Colonic mucosa (tissue), 4 donors: ENCODE measurements at regions of chr5 and their contacts with region 1.

Region 1: DNA sequence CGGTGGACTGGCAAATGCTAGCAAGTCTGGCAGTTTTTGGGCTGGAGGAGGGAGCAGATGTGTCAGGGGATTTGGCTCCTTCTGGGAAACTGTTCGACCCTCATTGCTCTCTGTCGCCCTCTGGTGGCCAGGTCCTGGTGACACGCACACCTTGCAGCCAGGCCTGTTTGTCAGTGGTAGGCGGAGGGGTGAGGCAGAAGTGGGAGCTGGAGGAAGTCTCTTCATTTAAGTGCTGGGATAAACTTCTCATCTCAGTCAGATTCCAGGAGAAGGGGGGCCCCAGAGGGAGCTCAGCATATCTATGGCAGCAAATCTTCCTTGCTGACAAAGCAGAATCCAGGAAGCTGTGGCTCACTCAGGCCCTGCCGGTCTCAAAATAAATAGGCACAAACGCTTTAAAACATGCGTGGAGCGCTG is 326.5 kb downstream of the ZSWIM6 start:
- DNase-seq: peak; percentile 89
- H3K4me3 ChIP-seq: no peak overlapping the region
- H3K27ac ChIP-seq: no peak overlapping the region
- H3K4me1 ChIP-seq: no peaks in the 10 kb centered on the region
- H3K27me3 ChIP-seq: no peaks in the 10 kb centered on the region
- CTCF ChIP-seq: peak; percentile 94

Region 2: GRCh38 chr5:61055434-61056006 is 603.1 kb before region 1 on chr5:
- intact Hi-C with region 1: loop called (anchors 10 kb)
- DNase-seq: no peak
- H3K4me3 ChIP-seq: no peak overlapping the region
- H3K27ac ChIP-seq: no peak overlapping the region
- H3K4me1 ChIP-seq: no peaks in the 10 kb centered on the region
- H3K27me3 ChIP-seq: no peaks in the 10 kb centered on the region
- CTCF ChIP-seq: peak; percentile 51

Region 3: GRCh38 chr5:61177716-61178115 is 480.9 kb before region 1 on chr5:
- intact Hi-C with region 1: loop called (anchors 10 kb)
- DNase-seq: no peak
- H3K4me3 ChIP-seq: no peak overlapping the region
- H3K27ac ChIP-seq: no peak overlapping the region
- H3K4me1 ChIP-seq: no peaks in the 10 kb centered on the region
- H3K27me3 ChIP-seq: no peaks in the 10 kb centered on the region
- CTCF ChIP-seq: no peak

Region 4: GRCh38 chr5:61331407-61332357 is 326.9 kb before region 1 on chr5 and contains the start of gene ZSWIM6:
- intact Hi-C with region 1: loop called (anchors 10 kb)
- DNase-seq: peak; percentile 99
- H3K4me3 ChIP-seq: peak within 1 kb of the TSS; percentile 78
- H3K27ac ChIP-seq: peak within 1 kb of the TSS; percentile 97
- H3K4me1 ChIP-seq: no peaks in the 10 kb centered on the region
- H3K27me3 ChIP-seq: no peaks in the 10 kb centered on the region
- CTCF ChIP-seq: peak; percentile 1
- total RNA-seq, gene ZSWIM6: 16.4 to 24.5 TPM

Region 5: DNA sequence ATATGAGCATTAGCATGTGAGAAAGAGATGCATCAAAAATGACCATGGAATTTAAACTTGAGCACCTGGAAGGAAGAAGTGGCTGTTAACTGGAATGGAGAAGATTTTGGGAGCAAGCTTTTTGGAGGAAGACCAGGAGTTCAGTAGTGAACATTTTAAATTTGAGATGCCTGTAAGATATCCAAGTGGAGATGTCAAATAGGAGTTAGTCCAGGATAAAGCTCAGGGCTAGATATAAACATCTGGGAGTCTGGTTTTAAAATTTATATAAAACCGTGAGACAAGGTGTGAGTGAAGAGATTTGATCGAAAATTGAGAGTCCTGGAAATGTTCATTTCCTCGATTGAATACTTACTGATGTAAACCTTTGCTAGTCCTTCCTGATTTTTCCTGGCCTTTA is 109.1 kb before region 1 on chr5:
- intact Hi-C with region 1: no loop called
- DNase-seq: no peak
- H3K4me3 ChIP-seq: no peak overlapping the region
- H3K27ac ChIP-seq: no peak overlapping the region
- H3K4me1 ChIP-seq: no peaks in the 10 kb centered on the region
- H3K27me3 ChIP-seq: no peaks in the 10 kb centered on the region
- CTCF ChIP-seq: no peak

Region 6: DNA sequence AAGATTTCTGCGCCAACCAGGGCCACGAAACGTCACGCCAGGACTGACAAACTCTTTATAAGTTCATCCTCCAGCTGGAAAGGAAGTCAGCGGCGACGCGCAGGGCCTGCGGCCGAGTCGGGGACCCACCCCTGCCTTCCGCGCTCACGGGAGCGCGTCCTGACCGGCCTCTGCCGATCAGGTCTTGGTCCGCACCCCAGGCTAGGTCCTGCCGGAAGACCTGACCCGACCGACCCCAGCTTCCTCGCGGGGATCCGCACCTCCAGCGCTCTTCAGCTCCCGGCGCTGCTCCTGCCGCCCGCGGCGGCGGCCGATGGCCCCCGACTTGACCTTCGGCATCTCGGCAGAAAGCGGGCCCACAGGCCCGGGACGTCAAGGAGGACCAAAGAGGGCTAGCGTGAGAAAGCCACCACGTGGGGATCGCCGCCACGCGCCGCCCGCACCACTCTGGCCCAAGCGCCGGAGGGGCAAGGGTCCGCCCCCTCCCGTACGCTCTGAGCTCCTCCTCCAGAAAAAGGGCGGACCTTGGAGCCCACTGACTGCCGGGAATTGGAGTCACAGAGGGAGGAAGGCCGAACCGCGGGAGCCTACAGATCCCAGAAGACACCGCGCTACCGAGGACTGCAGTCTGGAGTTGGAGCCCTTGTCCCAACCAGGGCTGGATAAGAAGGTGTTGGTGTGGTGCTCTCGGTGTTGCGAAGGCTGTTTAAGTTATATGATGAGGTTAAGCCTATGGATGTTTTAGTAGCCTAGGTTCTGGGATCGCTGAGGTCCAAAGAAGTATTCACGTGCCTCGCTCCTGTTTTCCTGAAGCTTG is 745.0 kb after region 1 on chr5 and contains the start of gene DIMT1:
- intact Hi-C with region 1: no loop called
- DNase-seq: peak; percentile 96
- H3K4me3 ChIP-seq: peak within 1 kb of the TSS; percentile 90
- H3K27ac ChIP-seq: peak within 1 kb of the TSS; percentile 95
- H3K4me1 ChIP-seq: peaks cover 3% of the 10 kb centered on the region
- H3K27me3 ChIP-seq: no peaks in the 10 kb centered on the region
- CTCF ChIP-seq: no peak
- total RNA-seq, gene DIMT1: 12.4 to 15.2 TPM